Stomach (tissue), 19 donors: ENCODE measurements at regions of chr6 and their contacts with region 1.

Region 1: GRCh38 chr6:105094133-105094640 is 85.6 kb downstream of the POPDC3 start:
- DNase-seq: no peak
- H3K4me3 ChIP-seq: no peak overlapping the region
- H3K27ac ChIP-seq: no peak overlapping the region
- H3K4me1 ChIP-seq: peaks cover 0 to 9% (median 0%) of the 10 kb centered on the region in 4 donors
- H3K27me3 ChIP-seq: no peaks in the 10 kb centered on the region
- CTCF ChIP-seq: no peak
- EP300 ChIP-seq: no peak
- POLR2A ChIP-seq: no peak

Region 2: GRCh38 chr6:105045526-105045925 is 48.7 kb before region 1 on chr6:
- intact Hi-C with region 1: no loop called
- DNase-seq: peak in 1 of 2 donors; percentile 5
- H3K4me3 ChIP-seq: no peak overlapping the region
- H3K27ac ChIP-seq: no peak overlapping the region
- H3K4me1 ChIP-seq: no peaks in the 10 kb centered on the region
- H3K27me3 ChIP-seq: no peaks in the 10 kb centered on the region
- CTCF ChIP-seq: no peak
- EP300 ChIP-seq: no peak
- POLR2A ChIP-seq: no peak

Region 3: GRCh38 chr6:105136431-105137350 is 42.5 kb after region 1 on chr6:
- intact Hi-C with region 1: no loop called
- DNase-seq: peak; percentile 57 to 80
- H3K4me3 ChIP-seq: peak overlapping the region; percentile 67 to 99 (median 80)
- H3K27ac ChIP-seq: peak overlapping the region; percentile 78 to 85 (median 81)
- H3K4me1 ChIP-seq: peaks cover 0 to 27% (median 18%) of the 10 kb centered on the region in 4 donors
- H3K27me3 ChIP-seq: peaks cover 0 to 20% (median 9%) of the 10 kb centered on the region in 3 donors
- CTCF ChIP-seq: peak in 2 of 7 experiments; percentile 17 to 18
- EP300 ChIP-seq: no peak
- POLR2A ChIP-seq: no peak

Region 4: GRCh38 chr6:105402939-105403935 is 309.1 kb after region 1 on chr6 and contains the start of gene PREP:
- intact Hi-C with region 1: loop called (anchors 10 kb)
- DNase-seq: peak; percentile 91 to 96
- H3K4me3 ChIP-seq: peak within 1 kb of the TSS; percentile 89 to 98 (median 94)
- H3K27ac ChIP-seq: peak within 1 kb of the TSS; percentile 87 to 93 (median 89)
- H3K4me1 ChIP-seq: peaks cover 16 to 51% (median 35%) of the 10 kb centered on the region in 4 donors
- H3K27me3 ChIP-seq: no peaks in the 10 kb centered on the region
- CTCF ChIP-seq: peak in 5 of 7 experiments; percentile 61 to 91 (median 75)
- EP300 ChIP-seq: no peak
- POLR2A ChIP-seq: no peak
- total RNA-seq, gene PREP: 12.8 to 53.3 (median 37.1) TPM